CD4-positive, alpha-beta T cell (primary cell): ENCODE measurements at regions of chr3 and their contacts with region 1.

Region 1: GRCh38 chr3:128879125-128879969 is at the start of gene ACAD9:
- DNase-seq: peak; percentile 92 to 99 (median 96)
- ATAC-seq: peak; percentile 87
- H3K4me3 ChIP-seq: peak within 1 kb of the TSS; percentile 94
- H3K4me3 Mint-ChIP-seq: peak within 1 kb of the TSS; percentile 88
- H3K27ac ChIP-seq: peak within 1 kb of the TSS; percentile 91 to 99
- H3K27ac Mint-ChIP-seq: peak within 1 kb of the TSS; percentile 92
- H3K4me1 ChIP-seq: peaks cover 56% of the 10 kb centered on the region
- H3K4me1 Mint-ChIP-seq: peaks cover 74% of the 10 kb centered on the region
- H3K27me3 ChIP-seq: no peaks in the 10 kb centered on the region
- H3K27me3 Mint-ChIP-seq: no peaks in the 10 kb centered on the region
- CTCF ChIP-seq: no peak
- total RNA-seq, gene ACAD9: 64.8 to 71.6 TPM

Region 2: GRCh38 chr3:128617557-128618397 is 261.6 kb before region 1 on chr3:
- CTCF ChIA-PET with region 1: interaction called, 6 read pairs
- POLR2A ChIA-PET with region 1: interaction called, 5 read pairs
- intact Hi-C with region 1: loop called in 1 of 2 experiments (anchors 5 kb)
- DNase-seq: peak; percentile 94 to 100 (median 99)
- ATAC-seq: peak; percentile 92
- H3K4me3 ChIP-seq: peak overlapping the region; percentile 99
- H3K4me3 Mint-ChIP-seq: peak overlapping the region; percentile 98
- H3K27ac ChIP-seq: peak overlapping the region; percentile 89 to 91
- H3K27ac Mint-ChIP-seq: peak overlapping the region; percentile 96
- H3K4me1 ChIP-seq: peaks cover 28% of the 10 kb centered on the region
- H3K4me1 Mint-ChIP-seq: peaks cover 29% of the 10 kb centered on the region
- H3K27me3 ChIP-seq: no peaks in the 10 kb centered on the region
- H3K27me3 Mint-ChIP-seq: no peaks in the 10 kb centered on the region
- CTCF ChIP-seq: peak; percentile 96

Region 3: DNA sequence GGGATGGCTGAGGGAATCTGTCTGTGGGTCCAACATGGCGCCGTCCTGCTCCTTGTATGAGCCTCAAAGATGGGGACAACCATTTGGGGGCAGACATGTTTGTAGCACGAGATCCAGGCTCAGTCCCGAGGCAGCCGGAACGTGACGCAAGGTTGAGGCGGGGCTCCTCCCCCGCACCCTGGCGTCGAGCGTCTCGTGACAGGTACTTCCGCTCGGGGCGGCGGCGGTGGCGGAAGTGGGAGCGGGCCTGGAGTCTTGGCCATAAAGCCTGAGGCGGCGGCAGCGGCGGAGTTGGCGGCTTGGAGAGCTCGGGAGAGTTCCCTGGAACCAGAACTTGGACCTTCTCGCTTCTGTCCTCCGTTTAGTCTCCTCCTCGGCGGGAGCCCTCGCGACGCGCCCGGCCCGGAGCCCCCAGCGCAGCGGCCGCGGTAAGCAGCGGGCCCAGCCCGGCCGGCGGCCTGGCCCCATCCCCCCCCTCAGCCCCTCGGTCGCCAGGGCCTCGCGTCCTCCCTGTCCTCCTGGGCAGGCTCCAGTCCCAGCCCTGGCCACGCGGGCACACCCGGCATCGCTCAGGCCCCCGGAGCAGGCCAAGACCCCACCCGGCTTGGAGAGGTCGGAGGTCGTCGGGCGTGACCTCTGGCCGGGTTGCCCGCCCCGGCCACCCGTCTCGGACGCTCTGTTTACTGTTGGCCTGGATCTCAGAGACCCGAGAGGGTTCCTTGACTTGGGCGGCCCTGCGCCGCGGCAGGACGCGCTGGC is 153.2 kb before region 1 on chr3 and contains the start of gene RAB7A:
- CTCF ChIA-PET with region 1: no interaction called
- POLR2A ChIA-PET with region 1: interaction called, 3 read pairs
- intact Hi-C with region 1: loop called in 1 of 2 experiments (anchors 2 kb)
- DNase-seq: peak; percentile 94 to 99 (median 97)
- ATAC-seq: peak; percentile 98
- H3K4me3 ChIP-seq: peak within 1 kb of the TSS; percentile 77
- H3K4me3 Mint-ChIP-seq: peak within 1 kb of the TSS; percentile 100
- H3K27ac ChIP-seq: peak within 1 kb of the TSS; percentile 64 to 78
- H3K27ac Mint-ChIP-seq: peak within 1 kb of the TSS; percentile 97
- H3K4me1 ChIP-seq: peaks cover 47% of the 10 kb centered on the region
- H3K4me1 Mint-ChIP-seq: peaks cover 57% of the 10 kb centered on the region
- H3K27me3 ChIP-seq: no peaks in the 10 kb centered on the region
- H3K27me3 Mint-ChIP-seq: no peaks in the 10 kb centered on the region
- CTCF ChIP-seq: no peak
- total RNA-seq, gene RAB7A: 113 to 121 TPM

Region 4: DNA sequence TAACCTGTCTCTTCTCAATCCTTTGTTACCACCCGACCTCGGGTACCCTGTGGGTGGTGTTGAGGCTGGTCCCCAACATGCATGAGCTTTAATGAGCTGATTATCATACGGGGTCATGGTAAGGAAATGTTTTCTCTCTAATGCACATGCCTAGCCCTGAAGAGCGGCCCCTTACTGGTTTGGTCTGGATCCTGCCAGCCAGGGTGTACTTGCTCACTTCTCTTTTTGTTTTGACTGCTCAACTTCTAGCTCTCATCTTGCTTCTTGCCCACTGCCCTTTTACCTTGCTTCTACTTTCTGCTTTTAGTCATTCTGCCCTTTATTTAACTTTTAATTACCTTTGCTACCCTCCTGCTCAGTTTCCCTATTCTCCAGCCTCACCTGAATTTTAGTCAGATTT is 44.3 kb before region 1 on chr3:
- CTCF ChIA-PET with region 1: no interaction called
- POLR2A ChIA-PET with region 1: no interaction called
- intact Hi-C with region 1: no loop called
- DNase-seq: no peak
- ATAC-seq: no peak
- H3K4me3 ChIP-seq: no peak overlapping the region
- H3K4me3 Mint-ChIP-seq: no peak overlapping the region
- H3K27ac ChIP-seq: no peak overlapping the region
- H3K27ac Mint-ChIP-seq: no peak overlapping the region
- H3K4me1 ChIP-seq: no peaks in the 10 kb centered on the region
- H3K4me1 Mint-ChIP-seq: no peaks in the 10 kb centered on the region
- H3K27me3 ChIP-seq: no peaks in the 10 kb centered on the region
- H3K27me3 Mint-ChIP-seq: no peaks in the 10 kb centered on the region
- CTCF ChIP-seq: no peak

Region 5: GRCh38 chr3:128845778-128846485 is 33.4 kb before region 1 on chr3:
- CTCF ChIA-PET with region 1: interaction called, 19 read pairs
- POLR2A ChIA-PET with region 1: interaction called, 4 read pairs
- intact Hi-C with region 1: no loop called
- DNase-seq: peak; percentile 62 to 88 (median 76)
- ATAC-seq: peak; percentile 81
- H3K4me3 ChIP-seq: peak overlapping the region; percentile 58
- H3K4me3 Mint-ChIP-seq: peak overlapping the region; percentile 72
- H3K27ac ChIP-seq: peak overlapping the region; percentile 7 to 18
- H3K27ac Mint-ChIP-seq: peak overlapping the region; percentile 55
- H3K4me1 ChIP-seq: peaks cover 21% of the 10 kb centered on the region
- H3K4me1 Mint-ChIP-seq: peaks cover 14% of the 10 kb centered on the region
- H3K27me3 ChIP-seq: no peaks in the 10 kb centered on the region
- H3K27me3 Mint-ChIP-seq: no peaks in the 10 kb centered on the region
- CTCF ChIP-seq: peak; percentile 90

Region 6: DNA sequence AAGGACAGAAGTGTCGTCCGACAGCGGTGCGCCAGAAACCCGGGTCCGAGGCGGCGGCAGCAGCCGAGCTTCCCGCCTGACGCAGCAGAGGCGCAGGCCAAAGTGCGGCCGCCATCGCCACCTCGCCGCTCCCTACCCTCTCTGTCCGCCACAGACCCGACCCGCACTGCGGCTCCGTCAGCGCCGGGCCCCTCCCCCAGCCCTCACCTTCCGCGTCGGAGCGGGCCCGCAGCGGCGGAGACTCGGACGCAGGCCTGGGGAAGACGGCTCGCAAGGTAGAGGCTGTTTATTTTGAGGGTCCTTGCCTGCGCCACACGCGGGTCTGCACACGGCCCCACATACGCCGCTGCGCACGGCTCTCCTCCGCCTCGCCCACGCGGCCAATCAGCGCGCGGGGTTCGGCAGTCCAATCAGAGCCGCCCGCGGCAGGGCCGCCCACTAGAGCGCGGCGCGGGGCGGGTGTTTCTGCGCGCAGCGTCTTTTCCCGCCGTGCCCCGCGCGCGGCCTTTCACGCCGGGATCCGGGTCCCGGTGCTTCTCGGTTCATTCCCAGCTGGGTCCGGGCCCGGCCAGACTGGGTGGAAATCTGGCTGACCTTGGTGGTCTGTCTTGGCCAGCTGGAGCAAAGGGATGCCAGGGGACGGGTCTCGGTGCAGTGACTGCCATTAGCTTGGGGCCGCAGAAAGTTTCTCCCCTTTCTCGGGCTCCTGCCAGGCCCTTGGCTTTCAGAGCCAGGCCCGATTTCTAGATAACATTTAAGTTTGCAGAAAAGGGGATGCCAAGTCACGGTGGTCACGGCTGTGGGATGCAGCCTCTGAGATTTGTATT is 304.4 kb after region 1 on chr3 and contains the start of gene CNBP:
- CTCF ChIA-PET with region 1: no interaction called
- POLR2A ChIA-PET with region 1: interaction called, 3 read pairs
- intact Hi-C with region 1: loop called in 1 of 2 experiments (anchors 5 kb)
- DNase-seq: peak; percentile 82 to 97 (median 91)
- ATAC-seq: peak; percentile 95
- H3K4me3 ChIP-seq: peak within 1 kb of the TSS; percentile 68
- H3K4me3 Mint-ChIP-seq: peak within 1 kb of the TSS; percentile 100
- H3K27ac ChIP-seq: peak within 1 kb of the TSS; percentile 91 to 95
- H3K27ac Mint-ChIP-seq: peak within 1 kb of the TSS; percentile 100
- H3K4me1 ChIP-seq: peaks cover 37% of the 10 kb centered on the region
- H3K4me1 Mint-ChIP-seq: peaks cover 49% of the 10 kb centered on the region
- H3K27me3 ChIP-seq: no peaks in the 10 kb centered on the region
- H3K27me3 Mint-ChIP-seq: no peaks in the 10 kb centered on the region
- CTCF ChIP-seq: no peak
- total RNA-seq, gene CNBP: 260 to 267 TPM

Region 7: DNA sequence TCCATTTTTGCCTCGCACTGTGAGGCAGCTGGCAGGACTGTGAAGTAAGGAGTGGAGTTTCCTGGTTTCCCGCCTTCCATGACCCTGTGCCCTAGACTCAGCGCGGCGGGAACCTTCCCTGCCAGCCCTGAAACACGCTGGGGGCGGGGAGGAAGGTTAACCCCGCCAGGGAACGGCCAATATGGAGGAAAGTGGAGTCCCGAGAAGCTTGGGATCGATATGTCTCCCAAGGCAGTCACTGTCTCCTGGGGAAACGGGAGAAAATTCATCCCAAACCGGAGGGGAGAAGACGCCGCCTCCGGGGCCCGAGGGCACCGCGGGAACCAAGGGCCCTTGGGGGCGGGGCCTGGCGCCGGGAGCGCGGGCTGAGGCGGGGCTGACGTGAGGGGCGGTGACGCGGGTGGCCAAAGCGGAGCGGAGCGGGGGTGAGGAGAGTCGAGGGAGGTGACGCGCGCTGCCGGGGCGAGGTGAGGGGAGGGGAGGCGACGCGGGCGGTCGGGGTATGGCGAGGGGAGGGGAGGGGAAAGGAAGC is 399.2 kb after region 1 on chr3 and contains the start of gene HMCES:
- CTCF ChIA-PET with region 1: no interaction called
- POLR2A ChIA-PET with region 1: interaction called, 5 read pairs
- intact Hi-C with region 1: loop called in 1 of 2 experiments (anchors 2 kb)
- DNase-seq: peak; percentile 91 to 98 (median 95)
- ATAC-seq: peak; percentile 92
- H3K4me3 ChIP-seq: peak within 1 kb of the TSS; percentile 79
- H3K4me3 Mint-ChIP-seq: peak within 1 kb of the TSS; percentile 97
- H3K27ac ChIP-seq: peak within 1 kb of the TSS; percentile 90 to 93
- H3K27ac Mint-ChIP-seq: peak within 1 kb of the TSS; percentile 95
- H3K4me1 ChIP-seq: peaks cover 45% of the 10 kb centered on the region
- H3K4me1 Mint-ChIP-seq: peaks cover 43% of the 10 kb centered on the region
- H3K27me3 ChIP-seq: no peaks in the 10 kb centered on the region
- H3K27me3 Mint-ChIP-seq: no peaks in the 10 kb centered on the region
- CTCF ChIP-seq: no peak
- total RNA-seq, gene HMCES: 63.5 to 64.0 TPM

Region 8: DNA sequence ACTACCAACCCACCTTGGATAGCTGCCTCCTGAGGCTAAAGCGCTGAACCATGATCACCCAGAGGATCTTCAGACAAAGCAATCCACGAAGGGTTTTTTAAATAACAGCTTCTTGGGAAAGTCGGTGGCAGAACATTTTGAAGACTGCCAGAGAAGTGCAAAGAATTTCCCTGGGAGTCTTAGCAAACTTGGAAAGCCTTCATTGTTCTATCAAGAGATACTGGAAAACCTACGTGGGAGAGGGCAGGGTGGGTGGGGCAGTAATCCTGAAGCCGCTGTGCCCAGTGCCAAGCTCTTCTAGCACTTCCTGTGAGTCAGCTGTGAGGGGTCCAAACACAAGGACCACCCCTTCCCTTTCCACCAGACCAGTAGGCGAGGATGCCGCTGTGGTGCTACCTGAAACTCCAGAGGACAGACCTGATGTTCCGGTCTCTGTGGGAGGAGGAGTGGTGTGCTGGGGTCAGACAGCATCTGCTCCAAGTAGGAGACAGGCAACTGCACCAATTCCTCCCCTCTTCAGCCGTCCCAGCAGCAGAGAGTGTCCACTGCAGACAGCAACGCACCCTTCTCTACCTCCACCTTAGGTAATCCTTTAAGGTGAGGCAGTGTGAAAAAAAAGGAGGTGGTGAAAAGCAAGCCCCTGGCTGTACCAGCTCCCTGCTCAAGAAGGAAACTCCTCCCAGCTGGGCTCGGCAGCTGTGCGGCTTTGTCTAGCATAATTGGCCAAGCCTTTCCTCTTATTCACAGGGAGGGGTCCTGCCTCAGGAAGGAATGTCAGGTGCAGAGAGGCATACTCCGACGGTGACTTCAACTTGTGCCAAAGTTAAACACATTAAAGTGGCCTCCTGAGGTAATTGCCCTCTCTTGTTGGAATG is 915.2 kb after region 1 on chr3:
- CTCF ChIA-PET with region 1: no interaction called
- POLR2A ChIA-PET with region 1: no interaction called
- intact Hi-C with region 1: no loop called
- DNase-seq: peak in 5 of 14 experiments; percentile 1 to 26 (median 13)
- ATAC-seq: peak; percentile 58
- H3K4me3 ChIP-seq: no peak overlapping the region
- H3K4me3 Mint-ChIP-seq: peak overlapping the region; percentile 31
- H3K27ac ChIP-seq: no peak overlapping the region
- H3K27ac Mint-ChIP-seq: no peak overlapping the region
- H3K4me1 ChIP-seq: peaks cover 10% of the 10 kb centered on the region
- H3K4me1 Mint-ChIP-seq: peaks cover 26% of the 10 kb centered on the region
- H3K27me3 ChIP-seq: no peaks in the 10 kb centered on the region
- H3K27me3 Mint-ChIP-seq: no peaks in the 10 kb centered on the region
- CTCF ChIP-seq: no peak